Naive thymus-derived CD4-positive, alpha-beta T cell (primary cell): ENCODE measurements at regions of chr11 and their contacts with region 1.

Region 1: DNA sequence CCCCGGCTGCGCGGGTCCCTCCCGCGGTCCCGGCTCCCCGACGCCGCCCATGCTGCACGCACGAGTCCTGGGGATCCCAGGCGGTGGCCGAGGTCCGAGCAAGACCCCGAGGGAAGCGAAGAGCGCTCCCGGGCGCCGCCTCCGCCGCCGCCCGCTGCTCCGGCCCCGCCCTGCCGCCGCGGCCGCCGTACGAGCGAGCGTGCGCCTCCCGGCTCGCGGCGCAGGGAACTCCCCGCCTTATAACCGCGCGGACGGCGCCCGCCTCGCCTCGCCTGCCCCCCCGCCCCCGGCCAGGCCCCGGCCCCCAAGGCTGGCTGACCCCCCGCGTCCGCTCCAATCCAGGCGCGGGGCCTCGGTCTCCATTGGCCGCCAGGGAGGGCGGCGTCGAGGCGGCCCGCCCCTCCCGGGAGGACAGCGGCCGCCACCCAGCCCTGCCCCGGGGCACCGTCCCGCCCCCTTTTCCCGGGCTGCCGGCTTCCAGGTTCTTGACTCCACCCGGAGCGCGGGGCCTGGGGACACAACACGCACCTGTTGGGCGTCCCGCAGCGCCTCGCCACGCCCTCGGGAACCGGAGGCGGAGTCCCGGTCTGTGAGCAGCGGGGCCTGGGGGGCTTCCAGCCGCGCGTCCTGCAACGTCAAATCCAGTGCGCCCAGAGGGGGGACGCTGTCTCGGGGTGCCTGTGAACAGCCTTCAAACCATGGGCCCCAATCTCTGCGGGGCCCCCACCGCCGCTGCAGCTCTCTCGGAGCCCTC is at the start of gene FADS3:
- DNase-seq: peak; percentile 39 to 78 (median 45)
- ATAC-seq: peak; percentile 77
- H3K4me3 ChIP-seq: peak within 1 kb of the TSS; percentile 64
- H3K4me3 Mint-ChIP-seq: peak within 1 kb of the TSS; percentile 73 to 93 (median 82)
- H3K27ac ChIP-seq: peak within 1 kb of the TSS; percentile 69
- H3K27ac Mint-ChIP-seq: peak within 1 kb of the TSS in 7 of 9 donors; percentile 36 to 86 (median 73)
- H3K4me1 ChIP-seq: peaks cover 9% of the 10 kb centered on the region in 2 donors
- H3K4me1 Mint-ChIP-seq: peaks cover 0 to 11% (median 4%) of the 10 kb centered on the region in 7 donors
- H3K27me3 ChIP-seq: no peaks in the 10 kb centered on the region
- H3K27me3 Mint-ChIP-seq: peaks cover 0 to 10% (median 0%) of the 10 kb centered on the region in 5 donors
- total RNA-seq, gene FADS3: 1.4 to 8.6 (median 6.2) TPM

Region 2: GRCh38 chr11:61827571-61828378 is 63.7 kb before region 1 on chr11 and contains the start of gene FADS2:
- CTCF ChIA-PET with region 1: no interaction called
- POLR2A ChIA-PET with region 1: no interaction called
- intact Hi-C with region 1: loop called in 1 of 2 experiments (anchors 5 kb)
- DNase-seq: peak; percentile 44 to 94 (median 65)
- ATAC-seq: peak; percentile 92
- H3K4me3 ChIP-seq: peak within 1 kb of the TSS; percentile 64
- H3K4me3 Mint-ChIP-seq: peak within 1 kb of the TSS; percentile 77 to 91 (median 84)
- H3K27ac ChIP-seq: peak within 1 kb of the TSS; percentile 43
- H3K27ac Mint-ChIP-seq: peak within 1 kb of the TSS in 4 of 9 donors; percentile 14 to 93 (median 80)
- H3K4me1 ChIP-seq: peaks cover 5 to 11% of the 10 kb centered on the region in 2 donors
- H3K4me1 Mint-ChIP-seq: peaks cover 10 to 51% (median 21%) of the 10 kb centered on the region in 7 donors
- H3K27me3 ChIP-seq: no peaks in the 10 kb centered on the region
- H3K27me3 Mint-ChIP-seq: peaks cover 0 to 38% (median 24%) of the 10 kb centered on the region in 5 donors
- total RNA-seq, gene FADS2: 0.19 to 192 (median 2.1) TPM

Region 3: DNA sequence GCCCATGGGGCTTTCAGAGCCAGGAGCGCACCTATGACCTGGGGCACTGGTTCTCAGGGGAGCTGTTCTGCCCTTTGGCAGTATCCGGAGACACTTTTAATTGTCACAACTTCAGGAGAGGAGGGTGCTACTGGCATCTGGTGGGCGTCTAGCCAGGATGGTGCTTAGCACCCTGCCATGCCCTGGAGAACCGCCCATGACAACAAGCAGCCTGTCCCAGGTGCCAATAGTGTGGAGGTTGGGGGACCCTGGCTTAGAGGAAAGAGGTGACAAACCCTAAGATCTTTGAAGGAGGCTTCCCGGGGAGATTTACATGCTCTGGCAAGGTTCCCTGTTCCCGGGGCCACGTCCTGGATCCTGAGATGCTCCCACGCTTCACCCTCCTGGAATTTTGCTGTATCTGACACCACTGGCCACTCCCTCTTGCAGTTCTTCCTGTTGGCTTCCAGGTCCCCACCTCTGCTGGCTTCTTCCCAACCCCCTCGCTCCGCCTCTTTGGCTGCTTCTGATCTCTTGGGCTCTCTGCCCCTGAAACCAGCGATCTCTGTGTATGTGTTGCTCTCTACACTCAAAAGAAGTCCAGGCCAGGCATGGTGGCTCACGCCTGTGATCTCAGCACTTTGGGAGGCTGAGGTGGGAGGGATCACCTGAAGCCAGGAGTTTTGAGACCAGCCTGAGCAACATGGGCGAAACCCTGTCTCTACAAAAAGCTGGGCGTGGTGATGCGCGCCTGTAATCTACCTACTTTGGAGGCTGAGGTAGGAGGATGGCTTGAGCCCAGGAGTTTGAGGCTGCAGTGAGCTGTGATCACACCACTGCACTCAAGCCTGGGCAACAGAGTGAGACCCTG is 31.2 kb before region 1 on chr11:
- CTCF ChIA-PET with region 1: no interaction called
- POLR2A ChIA-PET with region 1: no interaction called
- intact Hi-C with region 1: no loop called
- DNase-seq: no peak
- ATAC-seq: no peak
- H3K4me3 ChIP-seq: no peak overlapping the region
- H3K4me3 Mint-ChIP-seq: no peak overlapping the region
- H3K27ac ChIP-seq: no peak overlapping the region
- H3K27ac Mint-ChIP-seq: no peak overlapping the region
- H3K4me1 ChIP-seq: no peaks in the 10 kb centered on the region
- H3K4me1 Mint-ChIP-seq: no peaks in the 10 kb centered on the region
- H3K27me3 ChIP-seq: no peaks in the 10 kb centered on the region
- H3K27me3 Mint-ChIP-seq: no peaks in the 10 kb centered on the region